Activated T-helper 1 cell treated with anti-CD3 and anti-CD28 coated beads, Interleukin-12 subunit alpha, Interleukin-12 subunit beta, Interleukin-2, Interleukin-4 antibody, amounts not matched to agents 30 ng/mL and 10 ng/mL and 1 ng/mL, durations not matched to agents 14 hours and 24 hours and 36 hours (primary cell): ENCODE measurements at regions of chr6 and their contacts with region 1.

Region 1: GRCh38 chr6:99425647-99426453 is 742 bp upstream of the PNISR start:
- DNase-seq: peak; percentile 46
- H3K4me3 Mint-ChIP-seq: peak overlapping the region; percentile 94
- H3K27ac Mint-ChIP-seq: peak overlapping the region; percentile 100
- H3K4me1 Mint-ChIP-seq: peaks cover 59% of the 10 kb centered on the region
- H3K27me3 Mint-ChIP-seq: no peaks in the 10 kb centered on the region

Region 2: DNA sequence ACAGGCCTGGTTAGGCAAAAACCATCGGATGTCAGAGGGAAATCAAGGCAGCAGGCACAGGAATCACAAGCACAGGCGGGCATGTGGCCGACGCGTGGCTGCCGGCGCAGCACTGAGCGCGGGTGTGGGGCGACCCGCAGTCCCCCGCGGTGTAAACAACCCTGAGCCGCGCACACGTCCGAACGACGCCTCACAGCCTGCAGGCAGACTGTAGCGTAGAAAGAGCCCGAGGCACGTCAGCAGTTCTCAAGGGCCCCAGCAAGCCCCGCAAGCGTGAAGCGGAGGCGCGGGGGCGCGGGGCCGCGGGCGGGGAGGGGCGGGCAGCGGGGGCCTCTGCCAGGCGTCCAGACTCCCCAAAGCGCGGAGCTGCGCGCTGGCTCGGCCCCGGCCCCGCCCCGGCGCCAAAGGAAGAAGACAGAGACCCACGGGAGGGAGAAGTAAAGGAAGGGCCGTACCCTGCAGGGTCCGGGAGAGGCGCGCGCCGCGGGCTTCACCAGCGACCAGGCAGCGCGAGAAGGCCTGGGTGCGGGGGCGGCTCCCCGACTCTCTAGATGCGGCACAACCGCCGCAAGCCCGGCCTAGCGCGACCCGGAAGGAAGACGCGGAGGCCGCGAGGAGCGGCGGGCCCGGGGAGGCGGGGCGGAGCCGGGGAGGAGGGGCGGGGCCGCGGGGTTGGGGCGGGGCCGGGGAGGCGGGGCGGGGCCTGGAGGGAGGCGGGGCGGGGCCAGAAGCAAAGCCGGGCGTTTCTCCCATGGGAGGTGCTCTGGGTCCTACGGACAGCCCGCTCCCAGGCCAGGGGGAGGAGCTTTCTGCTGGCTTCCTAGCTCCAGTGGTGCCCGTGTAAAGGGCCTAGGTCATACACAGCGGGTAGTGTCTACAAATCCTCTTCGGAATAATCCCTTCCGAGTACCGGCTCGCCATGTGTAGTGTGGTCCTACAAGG is 478.2 kb before region 1 on chr6 and contains the start of gene FBXL4:
- intact Hi-C with region 1: loop called (anchors 5 kb)
- DNase-seq: peak; percentile 76
- H3K4me3 Mint-ChIP-seq: peak within 1 kb of the TSS; percentile 92
- H3K27ac Mint-ChIP-seq: peak within 1 kb of the TSS; percentile 97
- H3K4me1 Mint-ChIP-seq: peaks cover 24% of the 10 kb centered on the region
- H3K27me3 Mint-ChIP-seq: peaks cover 23% of the 10 kb centered on the region
- total RNA-seq, gene FBXL4: 13.1 and 13.3 TPM in 2 replicates

Region 3: GRCh38 chr6:99364026-99364425 is 61.8 kb before region 1 on chr6:
- intact Hi-C with region 1: loop called (anchors 2 kb)
- DNase-seq: no peak
- H3K4me3 Mint-ChIP-seq: no peak overlapping the region
- H3K27ac Mint-ChIP-seq: peak overlapping the region; percentile 47
- H3K4me1 Mint-ChIP-seq: peaks cover 14% of the 10 kb centered on the region
- H3K27me3 Mint-ChIP-seq: peaks cover 4% of the 10 kb centered on the region

Region 4: DNA sequence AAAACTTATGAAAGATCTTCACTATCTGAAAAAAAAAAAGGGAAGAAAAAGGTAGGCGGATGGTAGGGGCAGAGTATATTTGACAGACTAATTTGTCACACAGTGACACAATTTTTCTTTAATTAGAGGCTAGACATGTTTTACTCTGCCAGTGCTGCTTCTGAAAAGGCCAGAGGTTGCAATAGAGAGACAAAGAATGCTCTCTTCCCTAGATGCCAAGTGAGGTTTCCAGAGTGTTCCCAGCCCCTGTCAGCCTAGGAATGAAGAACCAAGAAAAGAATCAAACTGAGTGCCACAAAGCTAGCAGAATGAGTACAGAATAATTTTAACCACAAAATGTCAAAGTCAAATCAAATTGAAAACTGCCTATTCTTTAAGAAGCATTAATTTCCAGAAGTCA is 13.8 kb before region 1 on chr6:
- intact Hi-C with region 1: no loop called
- DNase-seq: no peak
- H3K4me3 Mint-ChIP-seq: no peak overlapping the region
- H3K27ac Mint-ChIP-seq: no peak overlapping the region
- H3K4me1 Mint-ChIP-seq: peaks cover 20% of the 10 kb centered on the region
- H3K27me3 Mint-ChIP-seq: no peaks in the 10 kb centered on the region

Region 5: GRCh38 chr6:99514089-99514488 is 88.2 kb after region 1 on chr6:
- intact Hi-C with region 1: loop called (anchors 1 kb)
- DNase-seq: no peak
- H3K4me3 Mint-ChIP-seq: peak overlapping the region; percentile 98
- H3K27ac Mint-ChIP-seq: no peak overlapping the region
- H3K4me1 Mint-ChIP-seq: peaks cover 32% of the 10 kb centered on the region
- H3K27me3 Mint-ChIP-seq: peaks cover 10% of the 10 kb centered on the region

Region 6: GRCh38 chr6:100880853-100881706 is 1455.2 kb after region 1 on chr6 and contains the start of gene ASCC3:
- intact Hi-C with region 1: loop called (anchors 1 kb)
- DNase-seq: peak; percentile 89
- H3K4me3 Mint-ChIP-seq: peak within 1 kb of the TSS; percentile 100
- H3K27ac Mint-ChIP-seq: peak within 1 kb of the TSS; percentile 100
- H3K4me1 Mint-ChIP-seq: peaks cover 47% of the 10 kb centered on the region
- H3K27me3 Mint-ChIP-seq: peaks cover 3% of the 10 kb centered on the region
- total RNA-seq, gene ASCC3: 70.1 and 70.8 TPM in 2 replicates